ENCODE measurements at regions of chr17 and their contacts with region 1.

Region 1: GRCh38 chr17:17877529-17878358 is 41.0 kb upstream of the SREBF1 start:
- DNase-seq: peak; percentile 38 to 92
- H3K4me3 ChIP-seq: peak overlapping the region in 1 of 2 donors; percentile 37
- H3K27ac ChIP-seq: peak overlapping the region; percentile 87 to 89
- H3K4me1 ChIP-seq: peaks cover 9 to 25% of the 10 kb centered on the region in 2 donors
- H3K27me3 ChIP-seq: no peaks in the 10 kb centered on the region
- CTCF ChIP-seq: no peak

Region 2: DNA sequence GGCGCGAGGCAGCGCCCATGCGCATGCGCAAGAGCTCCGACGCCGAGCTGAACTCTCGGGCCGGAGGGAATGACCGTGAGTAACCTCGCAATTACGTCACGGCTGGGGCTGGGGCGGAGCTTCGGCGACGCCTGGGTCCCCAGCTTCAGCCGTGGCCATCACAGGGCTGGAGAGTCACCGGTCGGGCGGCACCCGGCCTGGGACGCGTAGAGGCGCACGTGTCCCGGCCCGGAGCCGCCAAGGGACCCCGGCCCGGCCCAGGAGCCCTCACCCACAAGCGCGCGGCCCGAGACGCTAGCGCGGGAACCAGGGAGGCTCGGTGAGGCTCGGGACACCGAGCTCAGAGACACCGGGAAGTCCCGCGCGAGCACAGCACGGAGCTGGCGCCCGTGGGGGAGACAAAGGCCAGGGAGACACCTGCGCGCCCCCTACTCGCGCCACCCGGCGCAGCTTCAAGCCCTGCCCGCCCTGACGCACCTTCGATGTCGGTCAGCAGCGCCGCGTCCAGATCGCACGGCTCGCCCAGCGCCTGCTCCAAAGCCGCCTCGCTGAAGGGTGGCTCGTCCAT is 41.4 kb before region 1 on chr17:
- intact Hi-C with region 1: loop called (anchors 1 kb)
- DNase-seq: peak; percentile 90 to 98
- H3K4me3 ChIP-seq: peak overlapping the region; percentile 62 to 73
- H3K27ac ChIP-seq: peak overlapping the region; percentile 93 to 98
- H3K4me1 ChIP-seq: peaks cover 19 to 52% of the 10 kb centered on the region in 2 donors
- H3K27me3 ChIP-seq: no peaks in the 10 kb centered on the region
- CTCF ChIP-seq: no peak

Region 3: GRCh38 chr17:17890773-17891759 is 13.3 kb after region 1 on chr17:
- intact Hi-C with region 1: no loop called
- DNase-seq: no peak
- H3K4me3 ChIP-seq: no peak overlapping the region
- H3K27ac ChIP-seq: no peak overlapping the region
- H3K4me1 ChIP-seq: no peaks in the 10 kb centered on the region
- H3K27me3 ChIP-seq: no peaks in the 10 kb centered on the region
- CTCF ChIP-seq: peak; percentile 21 to 44 (median 27)

Region 4: GRCh38 chr17:17919169-17920107 is 41.7 kb after region 1 on chr17:
- intact Hi-C with region 1: loop called (anchors 5 kb)
- DNase-seq: peak in 1 of 2 donors; percentile 83
- H3K4me3 ChIP-seq: no peak overlapping the region
- H3K27ac ChIP-seq: no peak overlapping the region
- H3K4me1 ChIP-seq: peaks cover 3 to 16% of the 10 kb centered on the region in 2 donors
- H3K27me3 ChIP-seq: no peaks in the 10 kb centered on the region
- CTCF ChIP-seq: peak; percentile 68 to 81 (median 69)

Region 5: DNA sequence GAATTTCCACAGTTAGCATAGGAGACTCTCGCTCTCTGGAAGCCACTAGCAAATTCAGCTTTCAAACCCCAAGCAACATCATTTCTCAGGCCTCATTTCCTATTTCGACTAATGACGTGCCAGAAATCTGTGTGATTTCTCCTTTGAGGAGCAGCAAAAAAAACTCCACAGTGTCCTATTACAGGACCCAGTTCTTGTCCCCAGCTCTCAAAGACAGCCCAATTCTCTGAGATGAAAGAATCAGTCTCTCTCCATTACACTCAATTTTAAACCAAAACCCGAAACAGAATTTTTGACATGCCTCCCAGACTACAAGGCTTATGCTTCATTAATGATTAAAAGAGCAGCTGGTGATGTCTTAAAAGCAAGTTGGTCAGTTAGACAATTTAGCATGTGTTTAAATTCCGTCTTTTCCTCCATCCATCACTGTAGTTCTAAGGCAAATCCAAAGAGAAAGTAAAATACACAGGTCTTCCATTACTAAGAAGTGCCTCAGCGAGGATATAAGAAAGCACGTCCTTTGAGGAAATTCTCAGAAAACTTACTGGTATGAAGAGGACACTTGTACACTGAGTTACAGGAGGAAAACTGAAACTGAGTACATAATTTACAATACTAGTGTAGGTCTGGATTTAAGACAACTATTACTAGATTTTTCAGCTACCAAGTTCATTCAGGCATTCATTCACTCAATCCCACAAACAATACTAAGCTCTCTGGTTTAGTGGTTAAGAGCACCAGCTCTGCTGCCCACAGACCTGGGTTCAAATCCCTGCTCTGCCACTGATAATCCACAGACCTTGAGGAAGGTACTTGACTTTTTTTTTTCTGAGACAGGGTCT is 82.0 kb after region 1 on chr17:
- intact Hi-C with region 1: loop called (anchors 5 kb)
- DNase-seq: no peak
- H3K4me3 ChIP-seq: peak overlapping the region in 1 of 2 donors; percentile 17
- H3K27ac ChIP-seq: peak overlapping the region; percentile 77 to 81
- H3K4me1 ChIP-seq: peaks cover 0 to 30% of the 10 kb centered on the region in 2 donors
- H3K27me3 ChIP-seq: no peaks in the 10 kb centered on the region
- CTCF ChIP-seq: no peak

Measured in ascending aorta (tissue), 2 donors.